AG04450 (cell line): ENCODE measurements at regions of chrX and their contacts with region 1.

Region 1: DNA sequence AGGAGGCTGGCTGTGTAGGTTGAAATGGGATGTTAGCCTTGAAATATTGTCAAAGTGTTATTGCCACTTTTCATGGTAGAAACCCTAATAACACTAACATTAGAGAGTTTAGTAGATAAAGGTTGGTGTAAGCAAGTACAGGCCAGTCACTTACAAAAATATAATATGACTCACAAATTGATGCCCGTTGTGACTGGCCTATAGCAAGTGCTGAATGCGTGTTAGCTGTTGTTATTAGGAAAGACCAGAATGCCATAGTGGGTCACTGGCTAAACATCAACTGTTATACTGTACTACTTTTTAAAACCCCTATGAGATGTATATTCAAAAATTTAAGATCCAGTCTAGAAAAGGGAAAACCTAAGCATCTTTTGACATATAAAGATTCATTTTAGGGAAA is 20.4 kb upstream of the GDPD2 start:
- DNase-seq: no peak
- H3K4me3 ChIP-seq: no peak overlapping the region
- H3K27ac ChIP-seq: no peak overlapping the region
- H3K27me3 ChIP-seq: no peaks in the 10 kb centered on the region
- CTCF ChIP-seq: no peak

Region 2: DNA sequence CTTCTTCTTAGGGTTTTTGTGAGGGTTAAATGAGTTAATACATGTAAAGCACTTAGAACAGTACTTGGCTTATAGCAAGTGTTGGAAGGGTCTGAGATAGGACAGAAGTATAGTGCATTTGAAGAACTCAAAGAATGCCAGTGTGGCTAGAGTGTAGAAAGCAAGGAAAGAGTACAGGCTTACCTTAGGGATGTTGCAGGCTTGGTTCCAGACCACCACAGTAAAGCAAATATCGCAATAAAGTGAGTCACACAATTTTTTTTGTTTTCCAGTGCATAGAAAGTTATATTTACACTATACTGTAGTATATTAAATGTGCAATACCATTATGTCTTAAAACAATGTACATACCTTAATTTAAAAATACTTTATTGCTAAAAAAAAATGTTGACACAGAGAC is 71.6 kb before region 1 on chrX:
- CTCF ChIA-PET with region 1: no interaction called
- POLR2A ChIA-PET with region 1: no interaction called
- DNase-seq: no peak
- H3K4me3 ChIP-seq: no peak overlapping the region
- H3K27ac ChIP-seq: no peak overlapping the region
- H3K27me3 ChIP-seq: no peaks in the 10 kb centered on the region
- CTCF ChIP-seq: no peak

Region 3: DNA sequence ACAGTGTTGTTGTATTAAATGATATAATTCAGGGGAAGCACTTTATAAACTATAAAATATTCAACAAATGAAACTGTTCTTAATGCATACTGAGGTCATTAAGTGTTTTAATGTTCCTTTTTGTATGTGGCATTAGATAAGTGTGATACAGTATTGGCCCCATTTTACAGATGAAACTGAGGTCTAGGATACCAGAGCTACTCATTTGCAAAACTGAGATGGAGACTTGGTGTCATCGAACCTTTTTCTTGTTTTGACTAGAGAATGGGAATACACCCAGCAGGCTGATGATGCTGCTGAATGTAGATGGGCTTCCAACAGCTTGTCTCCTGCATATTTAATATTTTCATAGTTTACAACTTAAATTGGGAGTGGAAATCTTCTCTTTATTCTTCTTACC is 998.0 kb after region 1 on chrX:
- CTCF ChIA-PET with region 1: no interaction called
- POLR2A ChIA-PET with region 1: interaction called, 10 read pairs
- DNase-seq: no peak
- H3K4me3 ChIP-seq: no peak overlapping the region
- H3K27ac ChIP-seq: no peak overlapping the region
- H3K27me3 ChIP-seq: no peaks in the 10 kb centered on the region
- CTCF ChIP-seq: no peak

Region 4: GRCh38 chrX:71823391-71824057 is 1420.8 kb after region 1 on chrX:
- CTCF ChIA-PET with region 1: no interaction called
- POLR2A ChIA-PET with region 1: no interaction called
- DNase-seq: no peak
- H3K4me3 ChIP-seq: no peak overlapping the region
- H3K27ac ChIP-seq: no peak overlapping the region
- H3K27me3 ChIP-seq: no peaks in the 10 kb centered on the region
- CTCF ChIP-seq: no peak